ENCODE measurements at regions of chr9 and their contacts with region 1.

Region 1: DNA sequence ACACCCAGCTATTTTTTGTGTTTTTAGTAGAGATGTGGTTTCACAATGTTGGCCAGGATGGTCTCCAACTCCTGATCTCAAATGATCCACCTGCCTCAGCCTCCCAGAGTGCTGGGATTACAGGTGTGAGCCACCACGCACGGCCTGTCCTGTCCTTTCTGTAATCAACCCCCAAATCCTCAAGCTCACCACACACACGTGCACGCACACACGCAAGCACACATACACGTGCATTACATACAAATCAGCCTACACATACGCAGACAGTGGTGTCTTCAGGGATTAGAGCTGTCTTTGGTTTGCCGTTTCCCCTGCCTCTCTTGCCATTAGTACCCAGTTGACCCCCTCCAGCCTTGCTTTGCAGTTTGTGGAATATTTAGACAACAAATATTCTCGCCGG is 6.5 kb downstream of the GLT6D1 start:
- DNase-seq: no peak
- ATAC-seq: no peak
- H3K4me3 Mint-ChIP-seq: no peak overlapping the region
- H3K27ac Mint-ChIP-seq: no peak overlapping the region
- H3K4me1 Mint-ChIP-seq: no peaks in the 10 kb centered on the region
- H3K27me3 Mint-ChIP-seq: peaks cover 5% of the 10 kb centered on the region

Region 2: DNA sequence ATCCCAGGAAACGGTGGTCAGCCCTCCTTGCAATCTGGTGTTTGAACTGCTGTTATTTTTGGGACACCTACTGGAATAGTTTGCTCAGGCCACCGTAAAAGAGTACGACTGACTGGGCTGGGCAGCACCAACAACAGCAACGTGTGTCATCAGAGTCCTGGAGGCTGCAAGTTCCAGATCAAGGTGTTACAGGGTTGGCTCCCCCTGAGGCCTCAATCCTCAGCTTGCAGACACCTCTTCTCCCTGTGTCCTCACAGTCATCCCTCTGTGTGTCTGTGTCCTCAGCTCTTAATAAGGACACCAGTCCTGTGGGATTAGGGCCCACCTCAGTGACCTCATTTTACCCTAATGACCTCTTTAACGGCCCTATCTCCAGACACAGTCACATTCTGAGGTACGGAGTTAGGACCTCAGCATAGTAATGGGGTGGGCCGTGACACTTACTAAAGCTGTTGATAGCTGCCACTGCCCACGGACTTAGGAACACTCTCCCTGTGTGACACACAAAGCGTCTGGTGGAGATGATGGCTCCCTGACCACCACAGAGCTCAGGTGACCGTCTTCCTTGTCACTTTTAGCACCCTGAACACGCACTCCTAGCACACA is 10.3 kb before region 1 on chr9:
- CTCF ChIA-PET with region 1: no interaction called
- POLR2A ChIA-PET with region 1: interaction called, 11 read pairs
- DNase-seq: no peak
- ATAC-seq: no peak
- H3K4me3 Mint-ChIP-seq: no peak overlapping the region
- H3K27ac Mint-ChIP-seq: no peak overlapping the region
- H3K4me1 Mint-ChIP-seq: no peaks in the 10 kb centered on the region
- H3K27me3 Mint-ChIP-seq: no peaks in the 10 kb centered on the region

Measured in activated CD8-positive, alpha-beta T cell treated with anti-CD3 and anti-CD28 coated beads, Interleukin-2, amount 10 ng/mL, durations not matched to agents 7 days and 5 days (primary cell).